ENCODE measurements at regions of chr17 and their contacts with region 1.

Region 1: DNA sequence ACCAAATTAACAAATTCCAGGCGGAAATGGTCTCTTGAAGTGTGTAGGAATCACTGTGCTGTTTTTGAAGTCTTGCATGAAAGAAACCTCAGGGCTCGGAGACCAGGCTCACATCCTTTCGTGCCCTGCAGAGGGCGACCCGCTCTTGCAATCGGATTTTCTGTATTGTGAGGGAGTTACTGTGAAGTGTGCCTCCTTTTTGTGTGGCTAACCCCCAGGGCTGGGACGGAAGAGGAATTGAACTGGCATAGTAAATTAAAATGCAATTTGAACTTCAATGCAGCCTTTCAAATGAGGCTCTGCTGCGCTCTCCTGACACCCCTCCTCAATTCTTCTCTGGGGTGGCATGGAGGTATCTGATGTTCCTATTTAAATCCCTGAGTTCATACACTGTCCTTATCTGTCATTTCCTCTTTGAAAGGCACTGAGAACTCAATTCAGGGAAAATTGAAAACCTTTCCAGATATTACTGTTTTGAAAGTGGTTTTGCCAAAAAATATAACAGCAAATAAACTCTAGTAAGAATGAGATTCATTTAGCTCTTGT is 51.5 kb upstream of the MGAT5B start:
- DNase-seq: peak; percentile 22 to 78 (median 66)
- ATAC-seq: peak; percentile 91
- H3K4me3 ChIP-seq: no peak overlapping the region
- H3K4me3 Mint-ChIP-seq: peak overlapping the region in 5 of 10 donors; percentile 14 to 58 (median 36)
- H3K27ac ChIP-seq: no peak overlapping the region
- H3K27ac Mint-ChIP-seq: peak overlapping the region in 6 of 9 donors; percentile 9 to 44 (median 16)
- H3K4me1 ChIP-seq: peaks cover 0 to 7% of the 10 kb centered on the region in 2 donors
- H3K4me1 Mint-ChIP-seq: peaks cover 4 to 13% (median 8%) of the 10 kb centered on the region in 7 donors
- H3K27me3 ChIP-seq: no peaks in the 10 kb centered on the region
- H3K27me3 Mint-ChIP-seq: peaks cover 0 to 19% (median 0%) of the 10 kb centered on the region in 5 donors

Region 2: GRCh38 chr17:76547184-76547641 is 269.4 kb before region 1 on chr17:
- CTCF ChIA-PET with region 1: no interaction called
- POLR2A ChIA-PET with region 1: no interaction called
- intact Hi-C with region 1: no loop called
- DNase-seq: peak in 8 of 9 donors; percentile 47 to 71 (median 64)
- ATAC-seq: peak; percentile 92
- H3K4me3 ChIP-seq: no peak overlapping the region
- H3K4me3 Mint-ChIP-seq: no peak overlapping the region
- H3K27ac ChIP-seq: no peak overlapping the region
- H3K27ac Mint-ChIP-seq: no peak overlapping the region
- H3K4me1 ChIP-seq: no peaks in the 10 kb centered on the region
- H3K4me1 Mint-ChIP-seq: peaks cover 0 to 14% (median 4%) of the 10 kb centered on the region in 7 donors
- H3K27me3 ChIP-seq: no peaks in the 10 kb centered on the region
- H3K27me3 Mint-ChIP-seq: peaks cover 3 to 18% (median 7%) of the 10 kb centered on the region in 5 donors

Region 3: GRCh38 chr17:76671123-76671911 is 145.3 kb before region 1 on chr17:
- CTCF ChIA-PET with region 1: no interaction called
- POLR2A ChIA-PET with region 1: no interaction called
- intact Hi-C with region 1: no loop called
- DNase-seq: peak; percentile 90 to 99 (median 98)
- ATAC-seq: peak; percentile 99
- H3K4me3 ChIP-seq: peak overlapping the region; percentile 76
- H3K4me3 Mint-ChIP-seq: peak overlapping the region; percentile 81 to 98 (median 92)
- H3K27ac ChIP-seq: peak overlapping the region; percentile 84
- H3K27ac Mint-ChIP-seq: peak overlapping the region; percentile 88 to 99 (median 96)
- H3K4me1 ChIP-seq: peaks cover 19 to 26% of the 10 kb centered on the region in 2 donors
- H3K4me1 Mint-ChIP-seq: peaks cover 20 to 43% (median 31%) of the 10 kb centered on the region in 7 donors
- H3K27me3 ChIP-seq: no peaks in the 10 kb centered on the region
- H3K27me3 Mint-ChIP-seq: peaks cover 0 to 10% (median 0%) of the 10 kb centered on the region in 5 donors

Region 4: GRCh38 chr17:76843703-76844484 is 27.2 kb after region 1 on chr17:
- CTCF ChIA-PET with region 1: no interaction called
- POLR2A ChIA-PET with region 1: no interaction called
- intact Hi-C with region 1: loop called in 1 of 2 experiments (anchors 1 kb)
- DNase-seq: no peak
- ATAC-seq: no peak
- H3K4me3 ChIP-seq: no peak overlapping the region
- H3K4me3 Mint-ChIP-seq: no peak overlapping the region
- H3K27ac ChIP-seq: no peak overlapping the region
- H3K27ac Mint-ChIP-seq: no peak overlapping the region
- H3K4me1 ChIP-seq: peaks cover 2 to 5% of the 10 kb centered on the region in 2 donors
- H3K4me1 Mint-ChIP-seq: peaks cover 9 to 25% (median 17%) of the 10 kb centered on the region in 7 donors
- H3K27me3 ChIP-seq: peaks cover 0 to 12% of the 10 kb centered on the region in 2 donors
- H3K27me3 Mint-ChIP-seq: peaks cover 54 to 72% (median 62%) of the 10 kb centered on the region in 5 donors

Region 5: DNA sequence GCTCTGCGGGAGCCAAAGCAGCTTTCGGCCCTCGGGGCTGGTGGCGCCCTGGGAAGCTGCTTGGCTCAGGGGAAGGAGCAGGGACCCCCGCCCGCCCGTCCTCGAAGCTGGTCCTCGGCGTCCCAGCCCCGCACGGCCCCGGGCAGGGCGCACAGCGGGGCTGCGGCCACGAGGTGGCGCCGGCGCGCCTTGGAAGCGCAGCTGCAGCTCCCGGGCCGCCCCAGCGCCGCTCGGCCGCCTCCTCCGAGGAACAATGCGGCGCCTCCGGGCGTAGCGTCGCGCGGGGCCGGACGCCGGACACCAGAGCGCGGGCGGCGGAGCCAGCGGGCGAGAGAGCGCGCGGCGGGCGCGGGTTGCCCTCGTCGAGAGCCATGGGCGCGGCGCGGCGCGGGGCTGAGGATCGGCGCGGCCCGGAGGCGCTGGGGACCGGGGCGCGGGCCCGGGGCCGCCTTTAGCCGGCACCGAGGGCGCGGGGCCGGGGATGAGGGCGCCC is 51.6 kb after region 1 on chr17 and contains the start of gene MGAT5B:
- CTCF ChIA-PET with region 1: interaction called, 3 read pairs
- POLR2A ChIA-PET with region 1: no interaction called
- intact Hi-C with region 1: loop called in 1 of 2 experiments (anchors 1 kb)
- DNase-seq: peak; percentile 57 to 91 (median 79)
- ATAC-seq: peak; percentile 96
- H3K4me3 ChIP-seq: peak within 1 kb of the TSS; percentile 20
- H3K4me3 Mint-ChIP-seq: peak within 1 kb of the TSS; percentile 60 to 86 (median 81)
- H3K27ac ChIP-seq: no peak within 1 kb of the TSS
- H3K27ac Mint-ChIP-seq: peak within 1 kb of the TSS in 3 of 9 donors; percentile 15 to 82 (median 76)
- H3K4me1 ChIP-seq: peaks cover 5 to 13% of the 10 kb centered on the region in 2 donors
- H3K4me1 Mint-ChIP-seq: peaks cover 4 to 13% (median 10%) of the 10 kb centered on the region in 7 donors
- H3K27me3 ChIP-seq: peaks cover 4 to 5% of the 10 kb centered on the region in 2 donors
- H3K27me3 Mint-ChIP-seq: peaks cover 14 to 45% (median 24%) of the 10 kb centered on the region in 5 donors
- total RNA-seq, gene MGAT5B: 0.24 to 3.7 (median 2.5) TPM

Region 6: DNA sequence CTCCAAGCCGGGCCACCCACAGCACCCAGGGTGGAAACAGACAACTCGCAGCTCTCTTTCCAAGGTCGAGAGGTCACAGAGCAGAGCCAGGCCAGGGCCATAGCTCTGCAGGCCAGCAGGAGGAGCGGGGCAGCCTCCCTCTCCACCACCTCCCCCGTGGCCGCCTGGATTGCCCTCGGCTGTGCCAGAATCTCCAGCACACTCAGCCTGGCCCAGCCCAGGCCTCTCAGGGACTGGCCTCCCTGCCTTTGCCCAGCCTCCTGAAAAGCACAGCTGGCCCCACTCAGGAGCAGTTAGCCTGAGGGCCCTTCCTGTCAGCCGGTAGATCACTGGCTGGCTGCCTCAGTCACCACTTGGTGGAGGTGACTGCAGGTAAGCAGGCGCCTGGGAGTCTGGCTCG is 238.3 kb after region 1 on chr17:
- CTCF ChIA-PET with region 1: interaction called, 7 read pairs
- POLR2A ChIA-PET with region 1: no interaction called
- intact Hi-C with region 1: loop called in 1 of 2 experiments (anchors 2 kb)
- DNase-seq: no peak
- ATAC-seq: no peak
- H3K4me3 ChIP-seq: no peak overlapping the region
- H3K4me3 Mint-ChIP-seq: no peak overlapping the region
- H3K27ac ChIP-seq: no peak overlapping the region
- H3K27ac Mint-ChIP-seq: no peak overlapping the region
- H3K4me1 ChIP-seq: no peaks in the 10 kb centered on the region
- H3K4me1 Mint-ChIP-seq: peaks cover 0 to 5% (median 0%) of the 10 kb centered on the region in 7 donors
- H3K27me3 ChIP-seq: peaks cover 0 to 5% of the 10 kb centered on the region in 2 donors
- H3K27me3 Mint-ChIP-seq: peaks cover 4 to 21% (median 10%) of the 10 kb centered on the region in 5 donors

Region 7: DNA sequence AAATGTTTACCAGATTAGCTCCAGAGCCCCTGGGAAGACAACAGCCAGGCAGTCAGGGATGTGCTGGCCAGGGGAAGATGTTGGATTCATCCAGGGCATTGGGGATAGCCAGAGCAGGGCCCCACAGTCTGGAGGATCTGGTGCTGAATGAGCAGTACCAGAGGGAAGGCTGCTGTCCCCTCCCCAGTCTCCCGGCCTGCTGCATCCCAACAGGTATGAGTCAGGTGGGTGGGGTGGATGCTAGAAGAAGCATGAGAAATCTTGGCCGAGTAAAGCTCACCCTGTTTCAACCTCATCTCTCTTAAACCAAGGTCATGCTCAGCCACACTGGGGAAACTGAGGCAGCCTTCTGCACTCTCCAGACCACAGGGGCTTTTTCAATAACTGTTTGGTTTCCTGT is 252.3 kb after region 1 on chr17:
- CTCF ChIA-PET with region 1: interaction called, 9 read pairs
- POLR2A ChIA-PET with region 1: no interaction called
- intact Hi-C with region 1: loop called (anchors 1 kb)
- DNase-seq: no peak
- ATAC-seq: no peak
- H3K4me3 ChIP-seq: no peak overlapping the region
- H3K4me3 Mint-ChIP-seq: no peak overlapping the region
- H3K27ac ChIP-seq: no peak overlapping the region
- H3K27ac Mint-ChIP-seq: no peak overlapping the region
- H3K4me1 ChIP-seq: no peaks in the 10 kb centered on the region
- H3K4me1 Mint-ChIP-seq: peaks cover 0 to 6% (median 0%) of the 10 kb centered on the region in 7 donors
- H3K27me3 ChIP-seq: no peaks in the 10 kb centered on the region
- H3K27me3 Mint-ChIP-seq: peaks cover 18 to 42% (median 29%) of the 10 kb centered on the region in 5 donors

Region 8: DNA sequence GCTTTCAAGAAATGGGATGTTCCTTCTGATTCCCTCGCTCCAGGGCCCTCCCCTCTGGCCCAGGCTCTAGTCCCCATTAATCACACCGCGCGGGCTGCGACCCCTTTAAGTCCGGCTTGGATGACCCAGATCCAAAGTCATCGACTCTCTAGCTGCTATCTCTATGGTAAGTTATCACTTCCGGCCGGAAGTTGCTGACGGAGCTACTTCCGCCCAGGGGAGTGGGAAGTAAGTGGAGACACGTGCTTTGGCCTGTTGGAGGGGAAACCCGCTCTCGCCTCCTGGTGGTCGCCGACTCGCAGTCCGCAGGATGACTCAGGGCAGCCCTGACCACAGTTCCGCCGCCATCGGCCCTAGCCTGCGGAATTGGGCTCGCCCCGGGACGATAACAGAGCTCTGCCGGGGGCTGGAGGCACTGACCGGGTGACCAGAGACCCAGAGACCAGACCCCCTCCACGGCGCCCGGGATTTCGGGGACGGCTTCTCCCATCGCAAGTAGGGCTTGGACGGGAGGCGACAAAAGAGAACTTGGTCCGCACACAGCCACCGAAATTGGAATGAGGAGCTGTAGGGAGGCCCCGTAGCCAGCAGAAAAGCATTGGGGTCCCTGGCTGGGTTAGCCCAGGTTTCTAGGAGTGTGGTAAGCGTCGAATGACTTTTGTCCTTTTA is 271.9 kb after region 1 on chr17:
- CTCF ChIA-PET with region 1: no interaction called
- POLR2A ChIA-PET with region 1: no interaction called
- intact Hi-C with region 1: loop called in 1 of 2 experiments (anchors 2 kb)
- DNase-seq: peak; percentile 61 to 86 (median 84)
- ATAC-seq: peak; percentile 96
- H3K4me3 ChIP-seq: peak overlapping the region; percentile 62
- H3K4me3 Mint-ChIP-seq: peak overlapping the region; percentile 89 to 100 (median 97)
- H3K27ac ChIP-seq: peak overlapping the region; percentile 89
- H3K27ac Mint-ChIP-seq: peak overlapping the region; percentile 91 to 100 (median 98)
- H3K4me1 ChIP-seq: peaks cover 23 to 31% of the 10 kb centered on the region in 2 donors
- H3K4me1 Mint-ChIP-seq: peaks cover 29 to 63% (median 51%) of the 10 kb centered on the region in 7 donors
- H3K27me3 ChIP-seq: no peaks in the 10 kb centered on the region
- H3K27me3 Mint-ChIP-seq: peaks cover 0 to 6% (median 0%) of the 10 kb centered on the region in 5 donors

Region 9: DNA sequence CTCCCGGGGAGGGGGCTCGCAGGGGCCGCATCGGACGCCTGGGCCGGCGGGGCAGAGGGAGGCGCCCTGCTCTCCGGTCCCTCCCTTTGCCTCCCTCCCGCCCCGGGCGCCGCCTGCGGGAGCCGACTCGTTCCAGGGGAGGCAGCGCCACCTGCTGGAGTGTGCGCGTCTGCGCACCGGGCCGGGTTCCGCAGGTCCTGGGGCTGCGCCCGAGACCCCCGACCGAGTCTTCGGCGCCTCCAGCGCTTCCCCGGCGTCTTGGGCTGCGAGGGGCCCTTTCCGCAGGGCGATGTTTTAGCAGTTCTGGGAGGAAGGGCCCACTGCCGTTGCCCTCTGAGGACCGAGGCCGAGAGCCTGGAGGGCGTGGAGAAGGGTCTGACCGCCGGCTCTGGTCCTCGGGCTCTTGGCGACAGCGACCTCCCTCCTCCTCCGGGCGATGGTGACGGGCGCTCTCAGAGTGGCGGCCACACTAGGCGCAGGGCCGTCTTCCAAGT is 430.4 kb after region 1 on chr17:
- CTCF ChIA-PET with region 1: no interaction called
- POLR2A ChIA-PET with region 1: no interaction called
- intact Hi-C with region 1: loop called in 1 of 2 experiments (anchors 1 kb)
- DNase-seq: peak; percentile 62 to 93 (median 83)
- ATAC-seq: peak; percentile 99
- H3K4me3 ChIP-seq: peak overlapping the region; percentile 35
- H3K4me3 Mint-ChIP-seq: peak overlapping the region; percentile 29 to 81 (median 66)
- H3K27ac ChIP-seq: no peak overlapping the region
- H3K27ac Mint-ChIP-seq: peak overlapping the region in 1 of 9 donors; percentile 61
- H3K4me1 ChIP-seq: peaks cover 0 to 5% of the 10 kb centered on the region in 2 donors
- H3K4me1 Mint-ChIP-seq: peaks cover 3 to 22% (median 7%) of the 10 kb centered on the region in 7 donors
- H3K27me3 ChIP-seq: no peaks in the 10 kb centered on the region
- H3K27me3 Mint-ChIP-seq: peaks cover 9 to 24% (median 13%) of the 10 kb centered on the region in 5 donors

Measured in naive thymus-derived CD4-positive, alpha-beta T cell (primary cell).